CD8-positive, alpha-beta T cell (primary cell): ENCODE measurements at regions of chr1 and their contacts with region 1.

Region 1: DNA sequence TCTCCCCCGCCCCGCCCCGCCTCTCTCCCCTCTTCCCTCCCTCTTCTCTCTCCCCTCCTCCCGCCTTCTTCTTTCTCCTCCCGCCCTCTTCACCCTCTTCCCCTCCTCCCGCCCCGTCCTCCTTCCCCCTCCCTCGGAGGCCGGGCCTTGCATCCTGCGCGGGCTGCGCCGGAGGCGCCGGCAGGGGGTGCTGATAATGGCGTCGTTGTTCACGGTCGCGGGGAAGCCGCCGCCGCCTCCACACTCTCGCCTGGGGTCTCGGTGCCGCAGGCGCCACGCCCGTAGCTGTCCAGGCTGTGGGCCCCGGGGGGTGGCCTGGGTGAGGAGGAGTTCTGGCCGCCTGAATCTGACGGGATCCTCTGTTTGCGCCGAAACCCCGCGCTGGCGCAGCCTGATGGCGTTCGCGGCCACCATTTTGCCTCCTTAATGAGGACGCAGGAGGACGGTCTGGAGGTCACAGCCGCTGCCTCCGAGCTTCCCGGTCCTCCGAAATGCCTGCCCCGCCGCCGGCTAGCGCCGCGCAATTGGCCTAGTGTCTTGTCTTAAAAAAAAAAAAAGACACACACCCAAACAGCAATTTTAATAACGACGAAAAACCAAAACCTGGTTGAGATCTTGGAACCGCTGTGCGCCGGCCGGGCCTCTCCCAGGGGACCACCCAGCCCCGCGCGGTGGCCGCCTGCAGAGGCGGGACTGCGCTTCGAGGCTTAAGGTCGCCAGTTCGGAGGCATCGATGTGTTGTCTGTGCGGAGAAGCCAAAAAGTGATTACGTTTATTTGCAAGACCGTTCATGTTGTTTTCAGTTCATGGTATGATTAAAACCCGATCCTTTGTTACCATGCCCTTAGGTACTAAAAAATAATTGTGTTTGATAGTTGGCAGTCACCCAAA is 106.6 kb upstream of the HNRNPU start:
- DNase-seq: peak; percentile 86 to 97 (median 93)
- ATAC-seq: peak; percentile 80
- H3K4me3 ChIP-seq: peak overlapping the region; percentile 68 to 70
- H3K4me3 Mint-ChIP-seq: peak overlapping the region; percentile 97
- H3K27ac ChIP-seq: peak overlapping the region; percentile 99 to 100
- H3K27ac Mint-ChIP-seq: peak overlapping the region; percentile 98
- H3K4me1 ChIP-seq: peaks cover 5% of the 10 kb centered on the region
- H3K4me1 Mint-ChIP-seq: peaks cover 19% of the 10 kb centered on the region
- H3K27me3 ChIP-seq: no peaks in the 10 kb centered on the region
- H3K27me3 Mint-ChIP-seq: no peaks in the 10 kb centered on the region
- CTCF ChIP-seq: peak; percentile 54

Region 2: DNA sequence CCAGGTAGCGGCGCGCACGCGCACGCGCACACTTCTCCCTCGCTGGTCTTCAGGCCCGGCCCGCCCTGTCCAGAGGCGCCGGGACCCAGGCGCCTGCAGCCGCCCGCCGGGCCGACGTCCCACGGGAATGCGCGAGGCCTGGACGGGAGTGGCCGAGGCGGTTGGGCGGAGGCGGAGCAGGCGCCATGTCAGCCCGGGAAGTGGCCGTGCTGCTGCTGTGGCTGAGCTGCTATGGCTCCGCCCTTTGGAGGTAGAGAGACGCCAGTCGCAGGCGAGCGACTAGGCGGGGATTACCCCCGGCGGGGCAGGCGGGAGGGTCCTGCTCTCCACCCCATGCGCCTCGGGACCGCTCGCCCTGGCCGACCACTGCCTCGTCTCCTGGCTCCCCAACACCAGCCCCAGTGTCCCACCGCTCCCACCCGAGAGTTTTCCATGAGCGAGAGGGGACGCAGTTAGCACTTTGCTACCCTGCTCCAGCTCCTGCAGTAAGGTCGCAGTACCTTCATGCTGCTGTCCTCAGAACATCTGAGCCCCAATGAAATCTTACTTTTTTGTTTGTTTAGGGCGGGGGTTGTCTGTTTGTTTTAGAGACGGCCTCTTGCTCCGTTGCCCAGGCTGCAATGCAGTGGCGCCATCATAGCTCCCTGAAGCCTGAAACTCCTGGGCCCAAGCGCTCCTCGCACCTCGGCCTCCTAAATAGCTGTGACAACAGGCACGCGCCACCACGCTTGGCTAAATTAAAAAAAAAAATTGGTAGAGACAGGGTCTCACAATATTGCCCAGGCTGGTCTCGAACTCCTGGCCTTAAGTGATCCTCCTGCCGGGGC is 509.4 kb before region 1 on chr1 and contains the start of gene CATSPERE:
- CTCF ChIA-PET with region 1: no interaction called
- POLR2A ChIA-PET with region 1: interaction called, 4 read pairs
- intact Hi-C with region 1: loop called in 1 of 2 experiments (anchors 2 kb)
- DNase-seq: peak; percentile 48 to 88 (median 74)
- ATAC-seq: peak; percentile 98
- H3K4me3 ChIP-seq: peak within 1 kb of the TSS; percentile 54 to 60
- H3K4me3 Mint-ChIP-seq: peak within 1 kb of the TSS; percentile 84
- H3K27ac ChIP-seq: peak within 1 kb of the TSS; percentile 66 to 71
- H3K27ac Mint-ChIP-seq: peak within 1 kb of the TSS; percentile 93
- H3K4me1 ChIP-seq: peaks cover 6% of the 10 kb centered on the region
- H3K4me1 Mint-ChIP-seq: peaks cover 17% of the 10 kb centered on the region
- H3K27me3 ChIP-seq: no peaks in the 10 kb centered on the region
- H3K27me3 Mint-ChIP-seq: no peaks in the 10 kb centered on the region
- CTCF ChIP-seq: no peak
- total RNA-seq, gene CATSPERE: 0.33 to 0.92 TPM

Region 3: DNA sequence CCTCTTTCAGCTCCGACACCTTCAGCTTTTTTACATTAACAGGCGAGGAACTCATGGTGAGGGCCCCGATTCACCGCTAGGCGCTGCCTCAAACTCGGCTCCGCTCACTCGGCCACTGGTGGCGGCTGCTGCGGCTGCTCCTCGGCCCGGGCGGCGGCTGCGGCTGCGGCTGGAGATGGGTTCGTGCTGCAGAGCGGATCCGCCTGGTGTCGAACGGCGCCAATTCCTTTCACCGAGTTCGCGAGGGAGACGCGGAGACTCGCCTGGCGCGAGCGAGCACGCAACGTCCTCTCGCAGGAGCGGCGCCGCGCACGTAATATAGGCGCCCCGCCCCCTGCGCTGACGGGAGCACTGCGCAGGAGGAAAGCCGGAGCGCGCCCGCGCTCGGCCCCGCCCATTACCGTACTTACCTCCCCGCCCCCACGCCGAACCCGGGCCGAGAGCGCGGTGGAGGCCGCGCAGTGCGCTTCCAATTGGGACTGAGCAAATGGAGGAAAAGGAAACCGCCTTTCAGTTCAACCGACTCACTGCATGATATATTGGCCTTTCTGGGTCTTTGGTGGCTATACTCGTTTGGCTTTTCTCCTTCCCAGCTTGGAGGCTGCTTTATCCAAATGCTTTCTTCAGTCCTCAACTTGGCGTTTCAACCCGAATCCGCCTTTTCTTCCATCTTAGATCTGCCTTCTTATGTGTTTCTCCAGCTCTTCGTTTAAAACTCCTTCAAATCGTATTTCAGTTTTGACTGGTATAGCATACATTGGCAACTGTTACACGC is 106.5 kb before region 1 on chr1 and contains the start of gene HNRNPU:
- CTCF ChIA-PET with region 1: interaction called, 8 read pairs
- POLR2A ChIA-PET with region 1: interaction called, 139 read pairs
- intact Hi-C with region 1: loop called (anchors 1 kb)
- DNase-seq: peak; percentile 91 to 99 (median 96)
- ATAC-seq: peak; percentile 63
- H3K4me3 ChIP-seq: peak within 1 kb of the TSS; percentile 85 to 88
- H3K4me3 Mint-ChIP-seq: peak within 1 kb of the TSS; percentile 94
- H3K27ac ChIP-seq: peak within 1 kb of the TSS; percentile 91 to 94
- H3K27ac Mint-ChIP-seq: peak within 1 kb of the TSS; percentile 98
- H3K4me1 ChIP-seq: peaks cover 34% of the 10 kb centered on the region
- H3K4me1 Mint-ChIP-seq: peaks cover 45% of the 10 kb centered on the region
- H3K27me3 ChIP-seq: no peaks in the 10 kb centered on the region
- H3K27me3 Mint-ChIP-seq: no peaks in the 10 kb centered on the region
- CTCF ChIP-seq: no peak
- total RNA-seq, gene HNRNPU: 411 to 415 TPM

Region 4: DNA sequence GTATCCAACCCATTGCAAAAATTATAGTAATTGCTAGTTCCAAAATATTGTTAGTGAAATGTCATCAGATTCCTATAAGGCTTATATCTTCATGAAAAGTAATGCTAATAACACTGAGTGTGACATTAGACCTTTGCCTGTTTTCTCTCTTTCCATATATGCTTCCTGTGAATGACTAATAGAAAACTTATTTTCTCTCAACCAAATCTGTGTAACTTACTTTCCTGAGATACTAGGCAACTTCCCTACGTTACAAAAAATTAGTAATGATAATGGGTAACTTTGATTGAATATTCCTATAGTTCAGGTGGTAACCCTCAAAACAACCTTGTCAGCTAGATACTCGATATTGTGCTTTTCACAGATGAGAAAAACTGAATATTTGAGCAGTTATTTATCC is 17.6 kb after region 1 on chr1:
- CTCF ChIA-PET with region 1: interaction called, 3 read pairs
- POLR2A ChIA-PET with region 1: interaction called, 10 read pairs
- intact Hi-C with region 1: no loop called
- DNase-seq: no peak
- ATAC-seq: no peak
- H3K4me3 ChIP-seq: no peak overlapping the region
- H3K4me3 Mint-ChIP-seq: no peak overlapping the region
- H3K27ac ChIP-seq: no peak overlapping the region
- H3K27ac Mint-ChIP-seq: no peak overlapping the region
- H3K4me1 ChIP-seq: no peaks in the 10 kb centered on the region
- H3K4me1 Mint-ChIP-seq: no peaks in the 10 kb centered on the region
- H3K27me3 ChIP-seq: no peaks in the 10 kb centered on the region
- H3K27me3 Mint-ChIP-seq: no peaks in the 10 kb centered on the region
- CTCF ChIP-seq: no peak